ENCODE measurements at regions of chr3 and their contacts with region 1.

Region 1: GRCh38 chr3:142586803-142587406 is 8.4 kb upstream of the ATR start:
- DNase-seq: peak; percentile 73
- ATAC-seq: peak; percentile 94
- H3K4me3 ChIP-seq: no peak overlapping the region
- H3K27ac ChIP-seq: no peak overlapping the region
- H3K4me1 ChIP-seq: no peaks in the 10 kb centered on the region
- H3K27me3 ChIP-seq: peaks cover 7% of the 10 kb centered on the region
- CTCF ChIP-seq: peak; percentile 70
- POLR2A ChIP-seq: no peak
- RAD21 ChIP-seq: peak; percentile 72

Region 2: GRCh38 chr3:142716102-142716501 is 129.2 kb after region 1 on chr3:
- CTCF ChIA-PET with region 1: no interaction called
- POLR2A ChIA-PET with region 1: no interaction called
- dilution Hi-C with region 1: no loop called
- in situ Hi-C with region 1: no loop called
- intact Hi-C with region 1: no loop called
- DNase-seq: no peak
- ATAC-seq: no peak
- H3K4me3 ChIP-seq: no peak overlapping the region
- H3K27ac ChIP-seq: no peak overlapping the region
- H3K4me1 ChIP-seq: no peaks in the 10 kb centered on the region
- H3K27me3 ChIP-seq: no peaks in the 10 kb centered on the region
- CTCF ChIP-seq: no peak
- POLR2A ChIP-seq: no peak
- RAD21 ChIP-seq: no peak

Region 3: GRCh38 chr3:142987080-142987700 is 400.3 kb after region 1 on chr3:
- CTCF ChIA-PET with region 1: interaction called, 5 read pairs
- POLR2A ChIA-PET with region 1: no interaction called
- dilution Hi-C with region 1: no loop called
- in situ Hi-C with region 1: loop called (anchors 5 kb)
- intact Hi-C with region 1: loop called (anchors 2 kb)
- DNase-seq: peak; percentile 55
- ATAC-seq: peak; percentile 65
- H3K4me3 ChIP-seq: no peak overlapping the region
- H3K27ac ChIP-seq: no peak overlapping the region
- H3K4me1 ChIP-seq: no peaks in the 10 kb centered on the region
- H3K27me3 ChIP-seq: peaks cover 17% of the 10 kb centered on the region
- CTCF ChIP-seq: peak; percentile 68
- POLR2A ChIP-seq: no peak
- RAD21 ChIP-seq: peak; percentile 63

Region 4: DNA sequence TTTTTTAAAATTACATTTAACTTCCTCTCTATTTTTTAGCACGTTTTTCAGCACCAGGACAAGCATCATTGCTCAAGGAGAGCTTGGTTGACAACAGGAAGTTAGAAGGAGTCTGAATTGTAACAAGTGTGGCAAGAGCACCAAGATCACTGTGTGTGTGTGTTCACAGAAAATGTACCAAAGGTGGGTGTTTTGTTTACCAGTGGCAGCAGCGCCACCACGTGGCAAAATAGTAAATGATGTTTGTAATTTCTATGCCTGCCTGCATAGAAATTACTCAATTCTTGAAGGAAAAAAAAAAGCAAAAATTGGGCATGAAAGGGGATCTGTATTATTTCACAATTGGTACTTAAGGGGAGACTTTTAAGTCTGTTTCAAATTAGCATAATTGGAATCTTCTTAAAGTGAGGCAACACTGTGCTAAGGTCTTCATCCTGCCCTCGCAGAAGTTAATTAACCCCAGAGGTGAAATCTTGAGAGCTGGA is 407.1 kb after region 1 on chr3:
- CTCF ChIA-PET with region 1: no interaction called
- POLR2A ChIA-PET with region 1: no interaction called
- dilution Hi-C with region 1: no loop called
- in situ Hi-C with region 1: loop called (anchors 5 kb)
- intact Hi-C with region 1: loop called (anchors 1 kb)
- DNase-seq: peak; percentile 72
- ATAC-seq: peak; percentile 66
- H3K4me3 ChIP-seq: no peak overlapping the region
- H3K27ac ChIP-seq: no peak overlapping the region
- H3K4me1 ChIP-seq: peaks cover 2% of the 10 kb centered on the region; the same call in 1 of the 2 replicates
- H3K27me3 ChIP-seq: no peaks in the 10 kb centered on the region; the same call in 1 of the 2 replicates
- CTCF ChIP-seq: peak; percentile 78
- POLR2A ChIP-seq: no peak
- RAD21 ChIP-seq: peak; percentile 81

Measured in IMR-90 (cell line).